PC-3 (cell line): ENCODE measurements at regions of chr20 and their contacts with region 1.

Region 1: DNA sequence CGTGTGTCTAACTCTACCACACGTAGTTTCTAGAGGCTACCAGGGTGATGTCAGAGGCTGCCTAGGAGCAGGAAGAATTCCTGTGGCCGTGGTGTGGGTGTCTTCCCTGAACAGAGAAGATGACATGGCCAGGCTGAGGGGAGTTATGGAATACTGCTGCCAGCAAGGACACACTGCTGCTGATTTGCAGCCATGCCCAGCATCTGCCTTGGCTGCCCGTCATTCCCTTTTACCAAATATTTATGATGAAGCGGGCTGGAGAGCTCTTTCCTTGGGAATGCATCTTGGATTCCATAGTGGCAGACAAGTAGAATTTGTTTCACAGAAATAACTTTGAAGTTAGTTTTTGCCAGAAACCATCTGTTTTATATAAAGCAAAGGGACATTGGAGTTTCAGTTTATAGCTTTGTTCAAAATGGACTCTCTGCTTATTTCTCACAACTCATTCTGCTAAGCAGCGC is 80.8 kb upstream of the VSTM2L start:
- DNase-seq: no peak
- ATAC-seq: no peak
- H3K4me3 ChIP-seq: no peak overlapping the region
- H3K27ac ChIP-seq: no peak overlapping the region
- H3K4me1 ChIP-seq: no peaks in the 10 kb centered on the region
- H3K27me3 ChIP-seq: no peaks in the 10 kb centered on the region
- CTCF ChIP-seq: no peak

Region 2: GRCh38 chr20:37911838-37912281 is 89.7 kb after region 1 on chr20:
- CTCF ChIA-PET with region 1: interaction called, 12 read pairs
- POLR2A ChIA-PET with region 1: no interaction called
- intact Hi-C with region 1: no loop called
- DNase-seq: peak; percentile 25
- ATAC-seq: peak; percentile 49
- H3K4me3 ChIP-seq: no peak overlapping the region
- H3K27ac ChIP-seq: no peak overlapping the region
- H3K4me1 ChIP-seq: peaks cover 14% of the 10 kb centered on the region
- H3K27me3 ChIP-seq: no peaks in the 10 kb centered on the region
- CTCF ChIP-seq: no peak